Posterior vena cava (tissue), 2 donors: ENCODE measurements at regions of chr16 and their contacts with region 1.

Region 1: DNA sequence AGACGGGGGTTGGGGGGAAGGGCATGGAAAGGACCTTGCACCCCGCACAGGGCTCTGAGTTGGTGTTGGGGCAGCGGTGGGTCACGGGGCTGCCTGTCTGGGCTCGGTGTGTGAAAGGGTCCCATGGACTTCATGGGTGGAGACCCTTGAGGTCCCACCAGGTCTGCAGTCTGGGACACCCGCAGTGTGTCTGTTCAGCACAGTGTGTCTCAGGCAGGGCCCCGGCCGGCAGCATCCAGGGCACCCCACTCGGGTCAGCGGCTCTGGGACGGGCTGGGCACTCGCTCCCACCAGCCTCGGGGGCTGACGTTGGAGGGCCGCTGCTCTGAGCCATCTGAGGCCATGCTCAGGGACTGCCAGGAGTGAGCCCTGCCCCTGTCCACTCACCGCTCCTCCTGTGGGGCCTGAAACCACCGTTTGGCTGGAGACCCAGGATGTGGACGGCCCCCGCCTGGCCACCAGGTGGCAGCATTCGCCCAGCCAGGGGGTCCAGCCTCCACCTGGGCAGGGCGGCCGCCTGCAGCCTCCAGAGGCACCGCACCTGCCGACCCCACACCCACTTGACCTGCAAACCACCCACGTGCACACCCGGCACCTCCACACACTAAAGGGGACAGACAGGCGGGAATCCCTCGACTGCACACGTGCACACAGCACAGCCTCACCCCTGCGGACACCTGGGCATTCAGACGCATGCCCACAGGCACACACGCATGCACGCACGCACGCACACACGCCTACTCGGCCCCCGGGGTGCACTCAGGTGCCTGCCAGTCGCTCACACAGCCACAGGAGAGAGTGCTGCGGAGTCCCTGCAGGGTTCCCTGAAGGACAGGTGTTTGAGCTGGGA is 10.1 kb upstream of the ZFPM1 start:
- DNase-seq: peak; percentile 91

Region 2: DNA sequence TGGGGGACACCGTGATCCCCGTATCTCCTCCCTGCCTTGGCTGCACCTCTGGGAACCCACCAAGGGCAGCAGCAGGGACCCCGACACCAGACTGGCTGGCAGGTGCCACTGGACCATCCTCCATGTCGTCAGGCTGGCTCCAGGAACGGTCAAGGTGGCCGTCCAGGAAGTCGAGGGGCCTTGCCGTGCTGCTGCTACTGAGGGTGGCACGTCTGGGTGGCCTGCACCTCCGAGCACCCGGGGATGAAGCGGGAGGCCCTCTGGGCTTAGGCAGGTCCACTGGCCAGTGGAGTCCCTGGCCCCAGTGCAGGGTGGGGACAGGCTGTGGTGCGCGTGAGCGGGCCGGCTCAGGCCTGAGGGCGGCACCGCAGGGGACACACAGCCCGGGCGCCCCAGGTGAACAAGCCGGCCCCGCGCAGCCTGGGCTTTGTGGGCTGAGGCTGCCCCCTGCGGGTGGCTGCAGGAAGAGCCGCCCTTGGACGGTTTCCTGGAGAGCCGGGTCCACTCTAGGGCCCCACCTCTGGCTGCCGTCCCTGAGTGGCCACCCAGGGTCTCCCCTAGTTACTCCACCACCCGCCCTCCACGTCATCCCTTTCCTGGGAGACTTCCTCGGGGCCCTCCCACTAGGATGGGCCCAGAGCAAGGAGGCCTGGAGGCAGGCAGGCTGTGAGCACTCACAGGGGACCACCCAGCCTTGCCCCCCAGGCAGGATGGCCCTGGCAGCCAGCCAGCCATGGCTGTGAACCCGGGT is 84.4 kb after region 1 on chr16:
- intact Hi-C with region 1: loop called (anchors 5 kb)
- DNase-seq: no peak